ENCODE measurements at regions of chr9 and their contacts with region 1.

Region 1: DNA sequence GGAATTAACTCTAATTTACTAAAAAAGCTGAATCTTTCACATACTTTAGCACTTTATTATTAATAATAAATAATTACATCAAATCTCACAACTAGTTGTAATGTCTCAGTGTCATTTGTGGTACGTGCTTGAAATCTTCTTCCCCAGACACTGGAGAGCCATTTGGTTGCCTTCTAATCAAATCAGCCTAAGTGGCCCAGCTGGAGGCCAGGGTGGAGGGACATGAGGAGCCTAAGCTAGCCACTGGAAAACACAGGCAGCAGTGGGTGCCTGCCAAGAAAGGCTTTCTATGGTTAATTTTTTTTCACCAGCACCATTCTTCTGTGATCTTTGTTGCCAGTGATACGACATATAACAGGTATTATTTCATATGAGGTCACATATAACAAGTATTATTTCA is 117.0 kb downstream of the ERCC6L2 start:
- DNase-seq: no peak
- H3K4me3 Mint-ChIP-seq: no peak overlapping the region
- H3K27ac Mint-ChIP-seq: no peak overlapping the region
- H3K4me1 Mint-ChIP-seq: peaks cover 14% of the 10 kb centered on the region
- H3K27me3 Mint-ChIP-seq: no peaks in the 10 kb centered on the region

Region 2: DNA sequence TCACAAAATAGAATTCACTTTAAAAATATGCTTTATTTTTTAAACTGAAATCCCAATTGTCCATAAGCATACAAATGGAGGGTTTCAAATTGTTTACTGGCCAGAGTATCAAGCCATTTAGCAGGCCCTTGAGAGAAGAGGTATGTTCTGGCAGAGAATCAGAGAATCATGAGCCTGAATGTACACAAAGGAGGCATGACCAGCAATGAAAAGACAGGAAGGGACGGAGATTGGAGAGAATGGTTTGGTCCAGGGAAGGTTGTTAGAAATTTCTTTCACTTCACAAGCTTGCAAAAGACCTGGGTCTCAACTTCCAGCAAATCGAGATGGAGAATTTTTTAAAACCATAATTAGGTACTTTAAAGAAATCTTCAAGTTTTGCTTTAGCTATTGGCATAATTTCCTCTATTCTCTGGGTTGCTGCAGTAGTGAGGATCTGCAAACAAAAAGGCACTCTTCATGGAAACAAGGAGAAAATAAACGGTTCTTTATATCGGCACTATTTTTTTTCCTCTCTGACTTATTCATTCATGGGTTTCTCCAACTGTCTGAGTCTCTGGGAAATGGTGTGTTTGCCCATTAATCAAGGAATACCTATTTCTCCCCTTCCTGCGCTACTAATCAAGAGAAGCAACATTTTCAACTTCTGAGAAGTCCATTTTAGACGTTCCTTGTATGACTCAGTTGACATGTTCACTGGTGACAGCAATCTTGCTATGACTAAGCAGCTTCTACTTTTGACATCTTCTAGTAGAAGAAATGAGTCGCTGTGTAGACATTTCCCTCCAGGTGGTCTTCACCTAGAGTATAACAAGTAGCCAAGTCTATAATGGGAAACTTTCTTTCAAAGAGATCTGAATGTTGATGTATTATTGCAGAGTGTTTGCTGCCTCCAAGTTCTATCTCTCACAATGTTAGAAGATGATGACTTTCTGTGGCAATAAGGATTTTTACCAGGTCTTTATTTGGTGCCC is 140.2 kb before region 1 on chr9:
- intact Hi-C with region 1: no loop called
- DNase-seq: peak; percentile 69
- H3K4me3 Mint-ChIP-seq: peak overlapping the region; percentile 56
- H3K27ac Mint-ChIP-seq: peak overlapping the region; percentile 69
- H3K4me1 Mint-ChIP-seq: peaks cover 21% of the 10 kb centered on the region
- H3K27me3 Mint-ChIP-seq: no peaks in the 10 kb centered on the region

Region 3: DNA sequence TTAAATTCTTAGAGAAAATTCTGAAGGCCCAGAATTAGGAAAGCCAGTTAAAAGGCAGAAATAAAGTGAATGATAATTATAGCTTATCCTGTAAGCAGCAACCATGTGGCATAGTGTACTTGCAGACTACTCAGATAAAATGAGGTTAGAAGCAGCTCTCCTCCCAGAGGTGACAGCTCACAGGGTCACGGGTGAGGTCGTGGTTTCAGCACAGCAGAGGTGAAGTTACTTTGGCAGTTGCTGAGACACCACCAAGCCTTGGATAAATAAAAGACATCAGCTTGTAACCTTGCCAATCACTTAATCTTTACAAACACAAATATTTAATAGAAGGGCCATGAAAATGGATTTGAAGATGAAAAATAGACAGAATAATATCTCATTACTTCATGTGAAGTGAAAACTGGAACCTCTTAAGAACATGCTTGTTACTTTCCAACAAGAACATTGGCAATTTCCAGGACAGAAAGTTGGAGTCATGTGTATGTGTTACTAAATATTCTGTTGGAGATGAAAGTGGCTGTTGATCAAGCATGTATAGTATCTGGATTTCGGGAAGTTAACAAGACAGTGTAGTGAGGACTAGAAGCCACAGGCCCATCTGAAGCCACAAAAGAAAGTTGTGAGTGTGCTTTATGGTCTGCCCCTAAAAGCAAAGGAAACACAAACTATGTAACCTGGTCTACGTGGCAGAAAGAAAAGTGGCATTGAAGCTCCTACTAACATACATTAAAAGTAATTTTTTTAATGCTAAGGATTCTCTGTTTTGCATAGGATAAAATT is 17.3 kb after region 1 on chr9:
- intact Hi-C with region 1: loop called (anchors 2 kb)
- DNase-seq: peak; percentile 93
- H3K4me3 Mint-ChIP-seq: peak overlapping the region; percentile 52
- H3K27ac Mint-ChIP-seq: peak overlapping the region; percentile 96
- H3K4me1 Mint-ChIP-seq: peaks cover 51% of the 10 kb centered on the region
- H3K27me3 Mint-ChIP-seq: no peaks in the 10 kb centered on the region